Mammary epithelial cell (primary cell): ENCODE measurements at regions of chr1 and their contacts with region 1.

Region 1: DNA sequence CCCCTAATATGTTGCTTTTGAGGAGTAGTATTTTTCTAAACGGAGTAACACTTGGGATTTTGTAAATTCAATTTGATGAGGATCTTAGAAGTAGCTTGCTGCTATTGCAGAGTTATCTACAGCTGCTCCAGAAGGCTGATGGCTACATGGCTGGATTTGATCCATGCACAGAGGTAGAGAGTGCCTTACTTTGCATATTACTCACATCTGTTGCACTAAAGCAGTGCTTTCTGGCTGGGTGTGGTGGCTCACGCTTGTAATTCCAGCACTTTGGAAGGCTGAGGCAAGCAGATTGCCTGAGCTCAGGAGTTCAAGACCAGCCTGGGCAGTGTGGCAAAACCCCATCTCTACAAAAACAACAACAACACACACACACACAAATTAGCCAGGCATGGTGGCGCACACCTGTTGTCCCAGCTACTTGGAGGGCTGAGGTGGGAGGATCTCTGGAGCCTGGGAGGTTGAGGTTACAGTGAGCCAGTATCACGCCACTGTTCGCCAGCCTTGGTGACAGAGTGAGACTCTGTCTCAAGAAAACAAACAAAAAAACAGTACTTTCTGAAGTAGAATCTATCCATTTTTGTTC is 24.6 kb downstream of the RALGPS2 start:
- DNase-seq: no peak
- H3K4me3 ChIP-seq: no peak overlapping the region
- H3K27ac ChIP-seq: no peak overlapping the region
- H3K4me1 ChIP-seq: no peaks in the 10 kb centered on the region
- H3K27me3 ChIP-seq: no peaks in the 10 kb centered on the region
- CTCF ChIP-seq: no peak

Region 2: GRCh38 chr1:178294654-178295053 is 455.0 kb before region 1 on chr1:
- CTCF ChIA-PET with region 1: interaction called, 12 read pairs
- dilution Hi-C with region 1: no loop called
- in situ Hi-C with region 1: no loop called
- intact Hi-C with region 1: no loop called
- DNase-seq: peak; percentile 56
- H3K4me3 ChIP-seq: no peak overlapping the region
- H3K27ac ChIP-seq: peak overlapping the region; percentile 6
- H3K4me1 ChIP-seq: peaks cover 1% of the 10 kb centered on the region
- H3K27me3 ChIP-seq: no peaks in the 10 kb centered on the region
- CTCF ChIP-seq: peak; percentile 12 to 18

Region 3: GRCh38 chr1:178713259-178713658 is 36.4 kb before region 1 on chr1:
- CTCF ChIA-PET with region 1: no interaction called
- dilution Hi-C with region 1: no loop called
- in situ Hi-C with region 1: no loop called
- intact Hi-C with region 1: no loop called
- DNase-seq: no peak
- H3K4me3 ChIP-seq: no peak overlapping the region
- H3K27ac ChIP-seq: no peak overlapping the region
- H3K4me1 ChIP-seq: no peaks in the 10 kb centered on the region
- H3K27me3 ChIP-seq: no peaks in the 10 kb centered on the region
- CTCF ChIP-seq: no peak